ENCODE measurements at regions of chr20 and their contacts with region 1.

Region 1: DNA sequence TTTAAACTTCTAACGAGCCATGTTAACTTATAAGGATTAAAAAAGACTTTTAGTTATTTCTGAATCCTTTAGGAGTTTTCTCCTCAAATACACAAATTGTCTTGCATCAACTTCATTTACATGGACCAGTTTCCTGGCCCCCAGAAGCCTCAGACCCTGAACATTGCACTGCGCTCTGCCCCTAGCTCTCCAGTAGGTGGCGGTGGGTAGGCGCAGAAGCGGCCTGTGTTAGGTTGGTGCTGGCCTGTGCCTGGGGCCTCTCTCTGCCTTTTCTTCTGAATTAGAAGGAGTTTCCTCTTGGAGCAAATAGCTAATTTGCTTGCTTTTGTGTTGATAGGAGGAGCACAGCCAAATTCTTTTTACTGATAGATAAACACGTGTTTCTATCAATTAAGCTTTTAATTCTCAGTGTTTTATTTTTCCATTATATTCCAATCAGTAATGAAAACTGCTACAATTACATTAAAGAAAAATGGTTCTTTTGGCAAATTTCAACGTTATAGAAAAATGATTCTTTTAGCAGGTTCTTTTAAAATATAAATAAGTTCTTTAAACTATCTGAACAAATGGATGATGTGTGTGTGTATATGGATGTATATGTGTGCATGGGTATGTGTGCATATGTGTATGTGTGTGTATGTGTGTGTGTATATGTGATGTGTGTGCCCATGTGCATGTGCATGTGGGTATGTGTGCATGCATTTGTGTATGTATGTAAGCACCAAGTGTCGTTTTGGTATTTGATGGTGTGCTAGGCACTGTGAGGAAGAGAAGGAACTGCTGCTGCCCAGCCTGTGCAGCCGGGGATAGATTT is 44.5 kb downstream of the DTD1 start:
- DNase-seq: peak; percentile 75
- ATAC-seq: peak; percentile 97
- H3K4me3 Mint-ChIP-seq: no peak overlapping the region
- H3K27ac Mint-ChIP-seq: no peak overlapping the region
- H3K4me1 Mint-ChIP-seq: no peaks in the 10 kb centered on the region
- H3K27me3 Mint-ChIP-seq: no peaks in the 10 kb centered on the region

Region 2: DNA sequence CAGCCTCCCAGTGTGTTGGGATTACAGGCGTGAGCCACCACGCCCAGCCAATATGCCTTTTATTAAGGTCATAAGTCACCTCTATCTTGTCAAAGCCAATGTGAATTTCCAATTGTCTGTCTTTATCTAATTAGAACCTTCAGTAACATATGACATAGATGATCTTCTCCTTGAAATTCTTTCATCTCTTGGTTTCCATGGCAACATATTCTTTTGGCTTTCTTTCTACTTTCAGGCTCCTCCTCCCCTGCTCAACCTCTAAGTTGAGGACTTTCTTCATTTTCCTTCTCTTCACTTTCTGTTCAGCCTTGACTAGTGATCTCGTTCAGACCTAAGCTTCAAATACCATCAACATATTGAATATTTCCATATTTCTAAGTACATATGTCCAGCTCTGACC is 181.2 kb before region 1 on chr20:
- CTCF ChIA-PET with region 1: no interaction called
- POLR2A ChIA-PET with region 1: no interaction called
- intact Hi-C with region 1: no loop called
- DNase-seq: no peak
- ATAC-seq: no peak
- H3K4me3 Mint-ChIP-seq: no peak overlapping the region
- H3K27ac Mint-ChIP-seq: no peak overlapping the region
- H3K4me1 Mint-ChIP-seq: no peaks in the 10 kb centered on the region
- H3K27me3 Mint-ChIP-seq: no peaks in the 10 kb centered on the region

Region 3: GRCh38 chr20:18609741-18610140 is 22.7 kb before region 1 on chr20:
- CTCF ChIA-PET with region 1: no interaction called
- POLR2A ChIA-PET with region 1: no interaction called
- intact Hi-C with region 1: no loop called
- DNase-seq: no peak
- ATAC-seq: no peak
- H3K4me3 Mint-ChIP-seq: no peak overlapping the region
- H3K27ac Mint-ChIP-seq: no peak overlapping the region
- H3K4me1 Mint-ChIP-seq: peaks cover 5% of the 10 kb centered on the region
- H3K27me3 Mint-ChIP-seq: no peaks in the 10 kb centered on the region

Region 4: DNA sequence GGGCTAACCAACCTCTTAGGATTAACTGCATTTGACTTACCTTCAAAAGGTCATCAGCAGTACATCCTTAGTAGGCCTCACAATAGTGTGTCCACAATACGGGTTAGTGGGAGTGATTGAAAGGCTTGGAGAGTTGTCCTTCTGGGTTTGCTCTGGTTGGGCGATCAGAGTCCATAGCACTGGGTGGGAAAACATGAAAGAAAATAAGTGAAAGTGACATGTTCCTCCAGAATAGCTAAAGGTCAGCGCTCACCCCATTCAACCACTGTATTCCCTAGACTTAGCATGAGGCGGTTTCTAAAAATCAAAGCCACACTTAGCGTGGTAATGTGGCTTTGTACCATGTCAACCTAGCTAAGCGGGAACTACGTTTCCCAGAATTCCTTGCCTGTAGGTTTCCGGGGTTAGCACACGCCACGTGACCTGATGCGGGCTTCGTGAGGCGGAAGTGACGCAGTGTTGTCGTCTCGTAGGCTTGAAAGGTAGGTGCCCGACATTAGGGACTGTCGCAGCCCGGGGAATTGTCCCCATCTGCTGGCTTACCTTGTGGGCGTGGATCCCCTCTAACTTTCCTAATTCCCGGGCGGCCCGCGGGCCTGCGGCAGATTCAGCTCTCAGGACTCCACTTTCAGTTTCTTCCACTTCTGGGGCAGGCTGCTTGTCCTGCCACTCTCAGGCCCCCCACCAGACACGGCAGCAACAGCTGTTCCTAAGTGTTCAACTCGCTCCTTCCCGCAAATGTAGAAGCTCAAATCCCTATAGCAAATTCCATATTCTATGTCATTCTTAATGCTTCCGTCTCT is 161.4 kb after region 1 on chr20:
- CTCF ChIA-PET with region 1: interaction called, 3 read pairs
- POLR2A ChIA-PET with region 1: no interaction called
- intact Hi-C with region 1: loop called in 1 of 2 experiments (anchors 5 kb)
- DNase-seq: peak; percentile 92
- ATAC-seq: peak; percentile 98
- H3K4me3 Mint-ChIP-seq: peak overlapping the region; percentile 87
- H3K27ac Mint-ChIP-seq: peak overlapping the region; percentile 96
- H3K4me1 Mint-ChIP-seq: peaks cover 17% of the 10 kb centered on the region
- H3K27me3 Mint-ChIP-seq: peaks cover 7% of the 10 kb centered on the region

Region 5: DNA sequence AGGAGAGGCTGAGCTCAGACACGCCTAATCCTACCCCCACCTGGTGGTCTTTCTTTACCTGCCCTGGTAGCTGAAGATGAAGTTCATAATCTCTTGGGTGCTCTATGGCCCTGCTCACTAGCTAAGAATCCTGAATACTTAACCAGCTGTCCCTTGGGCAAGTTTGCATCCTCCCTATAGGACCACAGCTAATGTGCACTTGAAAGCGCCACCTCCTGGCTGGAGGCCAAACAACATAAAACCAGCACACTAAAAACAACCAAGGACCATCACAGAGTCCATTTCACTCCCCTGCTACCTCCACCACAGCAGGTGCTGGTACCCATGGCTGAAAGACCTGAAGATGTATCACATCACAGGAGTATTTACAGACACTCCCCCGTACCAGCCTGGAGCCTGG is 424.5 kb after region 1 on chr20:
- CTCF ChIA-PET with region 1: interaction called, 3 read pairs
- POLR2A ChIA-PET with region 1: no interaction called
- intact Hi-C with region 1: loop called (anchors 1 to 5 kb)
- DNase-seq: peak; percentile 33
- ATAC-seq: no peak
- H3K4me3 Mint-ChIP-seq: no peak overlapping the region
- H3K27ac Mint-ChIP-seq: no peak overlapping the region
- H3K4me1 Mint-ChIP-seq: no peaks in the 10 kb centered on the region
- H3K27me3 Mint-ChIP-seq: peaks cover 3% of the 10 kb centered on the region

Region 6: DNA sequence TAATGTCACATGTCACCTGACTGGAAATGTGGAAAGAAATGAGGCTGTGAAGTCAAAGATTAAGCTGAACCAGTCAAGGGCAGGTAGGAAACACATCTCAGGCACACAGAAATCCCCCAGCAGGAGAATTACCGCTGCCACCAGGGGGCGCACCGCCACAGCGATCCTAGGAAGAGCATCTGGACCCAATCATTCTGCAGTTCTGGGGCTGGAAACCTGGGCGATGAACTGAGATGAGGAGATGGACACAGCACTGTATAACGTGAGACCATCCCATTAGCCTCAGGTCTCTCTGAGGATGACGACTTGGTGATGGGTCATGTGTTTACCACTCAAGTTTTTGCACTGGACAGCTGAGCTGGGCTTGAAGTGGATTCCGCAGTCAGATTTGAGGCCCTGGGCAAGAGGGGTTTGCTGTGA is 573.6 kb after region 1 on chr20:
- CTCF ChIA-PET with region 1: interaction called, 3 read pairs
- POLR2A ChIA-PET with region 1: no interaction called
- intact Hi-C with region 1: loop called in 1 of 2 experiments (anchors 10 kb)
- DNase-seq: peak; percentile 84
- ATAC-seq: peak; percentile 57
- H3K4me3 Mint-ChIP-seq: no peak overlapping the region
- H3K27ac Mint-ChIP-seq: no peak overlapping the region
- H3K4me1 Mint-ChIP-seq: no peaks in the 10 kb centered on the region
- H3K27me3 Mint-ChIP-seq: peaks cover 28% of the 10 kb centered on the region

Region 7: GRCh38 chr20:19661717-19662636 is 1029.6 kb after region 1 on chr20:
- CTCF ChIA-PET with region 1: interaction called, 5 read pairs
- POLR2A ChIA-PET with region 1: no interaction called
- intact Hi-C with region 1: loop called in 1 of 2 experiments (anchors 5 kb)
- DNase-seq: peak; percentile 69
- ATAC-seq: peak; percentile 47
- H3K4me3 Mint-ChIP-seq: no peak overlapping the region
- H3K27ac Mint-ChIP-seq: no peak overlapping the region
- H3K4me1 Mint-ChIP-seq: peaks cover 2% of the 10 kb centered on the region
- H3K27me3 Mint-ChIP-seq: peaks cover 25% of the 10 kb centered on the region